ENCODE measurements at regions of chrX and their contacts with region 1.

Region 1: DNA sequence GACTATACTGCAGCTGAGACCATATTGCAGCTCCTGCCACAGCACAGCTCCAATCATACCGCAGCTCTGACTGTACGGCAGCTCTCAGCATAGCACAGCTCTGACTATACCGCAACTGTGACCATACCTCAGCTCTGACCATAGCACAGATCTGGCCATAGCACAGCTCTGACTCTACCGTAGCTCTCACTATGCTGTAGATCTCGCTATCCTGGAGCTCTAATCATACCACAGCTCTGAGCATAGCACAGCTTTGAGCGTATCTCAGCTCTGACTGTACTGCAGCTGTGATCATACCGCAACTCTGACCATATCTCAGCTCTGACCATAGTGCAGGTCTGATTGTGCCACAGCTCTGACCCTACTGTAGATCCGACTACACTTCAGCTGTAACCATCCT is 139.2 kb downstream of the ASMT start:
- DNase-seq: no peak
- ATAC-seq: no peak

Region 2: GRCh38 chrX:1700757-1701156 is 53.3 kb before region 1 on chrX:
- intact Hi-C with region 1: no loop called
- DNase-seq: no peak
- ATAC-seq: no peak

Region 3: GRCh38 chrX:1734806-1735205 is 19.3 kb before region 1 on chrX:
- intact Hi-C with region 1: loop called (anchors 1 kb)
- DNase-seq: no peak
- ATAC-seq: no peak

Region 4: DNA sequence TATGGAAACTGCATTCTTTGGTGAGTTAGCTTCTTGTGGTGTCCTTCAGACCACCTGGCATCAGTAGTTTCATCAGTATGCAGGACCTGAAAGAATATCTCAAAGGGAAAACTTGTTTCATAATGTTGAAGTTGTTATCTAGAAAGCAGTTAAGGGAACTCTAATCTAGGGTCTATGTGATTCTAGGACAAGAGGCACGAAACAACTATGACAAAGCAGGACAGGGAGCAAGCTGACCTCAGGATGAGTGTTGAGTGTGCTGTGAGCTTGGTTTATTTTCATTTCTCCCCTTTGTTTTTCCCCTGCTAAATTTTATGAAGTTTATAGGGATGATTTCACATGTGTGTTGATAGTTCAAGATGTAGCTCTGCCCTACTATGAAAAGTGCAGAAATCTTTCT is 1526.6 kb after region 1 on chrX:
- intact Hi-C with region 1: no loop called
- DNase-seq: no peak
- ATAC-seq: no peak

Measured in sciatic nerve (tissue), 2 donors.